ENCODE measurements at regions of chr5 and their contacts with region 1.

Region 1: GRCh38 chr5:142655339-142656267 is 30.3 kb downstream of the FGF1 start:
- DNase-seq: peak; percentile 88
- H3K4me3 ChIP-seq: no peak overlapping the region
- H3K27ac ChIP-seq: peak overlapping the region; percentile 74
- H3K4me1 ChIP-seq: peaks cover 48% of the 10 kb centered on the region
- H3K27me3 ChIP-seq: no peaks in the 10 kb centered on the region
- CTCF ChIP-seq: peak; percentile 100

Region 2: GRCh38 chr5:142151436-142152383 is 503.9 kb before region 1 on chr5:
- intact Hi-C with region 1: loop called (anchors 5 kb)
- DNase-seq: no peak
- H3K4me3 ChIP-seq: no peak overlapping the region
- H3K27ac ChIP-seq: no peak overlapping the region
- H3K4me1 ChIP-seq: peaks cover 18% of the 10 kb centered on the region
- H3K27me3 ChIP-seq: no peaks in the 10 kb centered on the region
- CTCF ChIP-seq: peak; percentile 91

Region 3: DNA sequence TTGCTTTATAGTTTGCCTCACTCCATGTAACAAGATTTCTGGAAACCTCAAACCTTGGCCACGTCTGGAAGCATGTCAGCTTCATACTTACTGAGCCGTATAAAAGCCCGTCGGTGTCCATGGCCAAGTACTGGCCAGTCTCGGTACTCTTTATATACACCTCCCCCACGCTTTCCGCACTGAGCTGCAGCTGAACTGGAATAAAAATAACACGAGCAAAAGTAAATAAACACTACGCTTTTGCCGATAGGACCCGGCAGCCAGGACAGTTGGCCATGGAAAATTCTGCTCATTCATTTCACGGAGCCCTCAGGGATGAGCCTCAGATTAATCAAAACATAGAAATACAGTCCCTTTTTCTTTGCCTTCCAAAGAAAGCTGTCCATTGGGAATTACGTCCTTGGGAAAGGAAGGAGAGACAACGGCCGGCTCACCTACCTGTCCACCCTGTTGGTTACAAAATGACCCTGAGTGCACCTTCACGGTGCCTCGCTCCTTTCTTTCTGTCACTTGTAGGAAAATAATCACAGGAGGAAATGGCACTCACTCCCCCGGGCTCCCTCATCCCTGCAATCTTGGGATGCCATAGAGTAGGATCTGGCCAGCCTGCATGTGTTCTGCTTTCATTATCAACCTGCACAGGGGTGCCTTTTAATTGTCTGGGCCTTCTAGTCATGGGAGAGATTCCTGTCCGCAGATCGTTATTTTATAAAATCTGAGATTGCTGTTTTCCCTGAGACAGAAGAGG is 54.8 kb before region 1 on chr5:
- intact Hi-C with region 1: loop called (anchors 10 kb)
- DNase-seq: peak; percentile 44
- H3K4me3 ChIP-seq: peak overlapping the region; percentile 53
- H3K27ac ChIP-seq: peak overlapping the region; percentile 82
- H3K4me1 ChIP-seq: peaks cover 45% of the 10 kb centered on the region
- H3K27me3 ChIP-seq: no peaks in the 10 kb centered on the region
- CTCF ChIP-seq: no peak

Region 4: GRCh38 chr5:142630927-142631539 is 24.6 kb before region 1 on chr5:
- intact Hi-C with region 1: no loop called
- DNase-seq: no peak
- H3K4me3 ChIP-seq: no peak overlapping the region
- H3K27ac ChIP-seq: peak overlapping the region; percentile 74
- H3K4me1 ChIP-seq: peaks cover 48% of the 10 kb centered on the region
- H3K27me3 ChIP-seq: no peaks in the 10 kb centered on the region
- CTCF ChIP-seq: no peak

Region 5: DNA sequence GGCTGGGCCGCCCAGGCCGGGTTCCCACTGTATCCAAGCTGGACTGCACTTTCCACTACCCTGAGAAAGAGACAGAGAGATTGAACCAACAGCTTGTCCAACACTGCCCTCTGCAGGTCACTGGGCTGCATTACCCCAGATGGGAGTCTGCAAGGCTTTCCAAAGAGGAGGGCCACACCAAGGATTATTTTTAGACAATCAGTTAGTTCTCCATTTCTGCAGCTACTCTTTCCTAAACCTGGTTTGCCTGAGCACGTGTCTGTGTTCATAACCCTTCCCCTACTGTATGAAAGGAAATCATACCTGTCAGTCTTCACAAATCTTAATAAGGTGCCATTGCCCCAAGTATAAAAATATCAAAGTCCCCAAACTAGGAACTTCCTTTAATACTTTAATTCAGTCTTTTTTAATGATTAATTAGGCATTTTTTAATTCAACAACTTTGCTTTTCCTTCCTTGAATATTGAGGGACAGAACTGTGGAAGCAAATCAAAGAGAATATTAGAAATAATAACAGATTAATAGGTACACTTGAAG is 43.6 kb after region 1 on chr5:
- intact Hi-C with region 1: loop called (anchors 5 kb)
- DNase-seq: peak; percentile 90
- H3K4me3 ChIP-seq: no peak overlapping the region
- H3K27ac ChIP-seq: peak overlapping the region; percentile 92
- H3K4me1 ChIP-seq: peaks cover 53% of the 10 kb centered on the region
- H3K27me3 ChIP-seq: no peaks in the 10 kb centered on the region
- CTCF ChIP-seq: peak; percentile 99

Region 6: DNA sequence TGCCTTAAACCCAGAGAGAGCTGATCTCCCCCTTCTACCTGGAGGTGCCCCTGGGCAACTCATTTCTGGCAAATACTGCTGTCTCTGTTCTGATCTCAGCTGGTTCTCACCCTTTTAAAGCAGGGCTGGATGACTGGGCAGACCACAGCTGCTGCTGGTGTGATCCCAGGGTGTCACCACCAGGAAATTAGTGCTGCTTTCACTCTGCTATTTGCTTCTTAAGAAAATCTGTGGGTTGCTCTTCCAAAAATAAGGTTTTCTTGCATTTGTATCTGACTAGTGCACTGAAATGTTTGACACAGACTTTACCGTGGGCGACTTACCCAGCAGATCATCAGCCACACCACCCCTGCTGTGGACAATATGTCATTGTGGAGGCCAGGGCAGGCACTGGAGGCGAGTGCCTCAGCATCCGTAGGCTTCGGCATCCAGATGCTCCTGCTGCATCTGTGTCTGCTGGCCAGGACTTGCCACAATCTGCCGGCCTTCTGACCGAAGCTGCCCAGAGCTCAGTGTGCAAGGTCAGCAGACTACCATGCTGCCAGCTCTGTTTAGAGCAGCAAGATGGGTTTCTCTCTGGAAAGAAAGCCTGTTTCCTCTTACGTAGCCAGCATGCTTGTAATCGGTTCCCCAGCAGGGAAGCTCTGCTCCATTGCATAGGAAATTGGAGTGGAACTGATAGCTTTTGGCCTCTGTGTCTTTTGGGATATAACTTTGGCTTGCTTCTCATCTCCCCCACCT is 128.2 kb after region 1 on chr5:
- intact Hi-C with region 1: no loop called
- DNase-seq: peak; percentile 41
- H3K4me3 ChIP-seq: peak overlapping the region; percentile 43
- H3K27ac ChIP-seq: peak overlapping the region; percentile 88
- H3K4me1 ChIP-seq: peaks cover 100% of the 10 kb centered on the region
- H3K27me3 ChIP-seq: no peaks in the 10 kb centered on the region
- CTCF ChIP-seq: no peak